Activated CD4-positive, alpha-beta memory T cell treated with anti-CD3 and anti-CD28 coated beads, Interleukin-2, amount 10 ng/mL, durations not matched to agents 7 days and 5 days (primary cell): ENCODE measurements at regions of chr6 and their contacts with region 1.

Region 1: GRCh38 chr6:43402820-43403219 is 24.5 kb upstream of the ABCC10 start:
- DNase-seq: no peak
- H3K4me3 Mint-ChIP-seq: no peak overlapping the region
- H3K27ac Mint-ChIP-seq: no peak overlapping the region
- H3K4me1 Mint-ChIP-seq: peaks cover under 1% of the 10 kb centered on the region
- H3K27me3 Mint-ChIP-seq: peaks cover 20% of the 10 kb centered on the region

Region 2: GRCh38 chr6:43269273-43270007 is 133.4 kb before region 1 on chr6:
- CTCF ChIA-PET with region 1: interaction called, 12 read pairs
- POLR2A ChIA-PET with region 1: no interaction called
- DNase-seq: peak; percentile 34
- H3K4me3 Mint-ChIP-seq: peak overlapping the region; percentile 30
- H3K27ac Mint-ChIP-seq: no peak overlapping the region
- H3K4me1 Mint-ChIP-seq: peaks cover 15% of the 10 kb centered on the region
- H3K27me3 Mint-ChIP-seq: peaks cover 45% of the 10 kb centered on the region

Region 3: DNA sequence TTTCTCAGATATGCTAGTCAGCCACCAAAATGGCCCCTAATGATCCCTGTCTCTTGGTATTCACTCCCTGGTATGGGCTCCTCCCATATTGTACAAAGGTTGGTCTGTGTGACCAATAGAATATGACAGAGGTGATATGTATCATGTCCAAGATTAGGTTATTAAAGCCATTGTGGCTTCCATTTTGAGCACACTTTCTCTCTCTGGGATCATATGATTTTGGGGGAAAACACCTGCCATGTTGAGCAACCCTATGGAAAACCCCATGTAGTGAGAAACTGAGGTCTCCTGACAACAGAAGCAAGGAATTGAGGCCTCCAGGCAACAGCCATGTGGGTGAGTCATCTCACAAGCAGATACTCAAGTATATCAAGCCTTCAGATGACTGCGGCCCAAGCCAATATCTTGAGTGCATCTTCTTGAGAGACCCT is 26.3 kb before region 1 on chr6:
- CTCF ChIA-PET with region 1: interaction called, 22 read pairs
- POLR2A ChIA-PET with region 1: no interaction called
- DNase-seq: peak; percentile 18
- H3K4me3 Mint-ChIP-seq: no peak overlapping the region
- H3K27ac Mint-ChIP-seq: no peak overlapping the region
- H3K4me1 Mint-ChIP-seq: peaks cover 13% of the 10 kb centered on the region
- H3K27me3 Mint-ChIP-seq: peaks cover 14% of the 10 kb centered on the region

Region 4: DNA sequence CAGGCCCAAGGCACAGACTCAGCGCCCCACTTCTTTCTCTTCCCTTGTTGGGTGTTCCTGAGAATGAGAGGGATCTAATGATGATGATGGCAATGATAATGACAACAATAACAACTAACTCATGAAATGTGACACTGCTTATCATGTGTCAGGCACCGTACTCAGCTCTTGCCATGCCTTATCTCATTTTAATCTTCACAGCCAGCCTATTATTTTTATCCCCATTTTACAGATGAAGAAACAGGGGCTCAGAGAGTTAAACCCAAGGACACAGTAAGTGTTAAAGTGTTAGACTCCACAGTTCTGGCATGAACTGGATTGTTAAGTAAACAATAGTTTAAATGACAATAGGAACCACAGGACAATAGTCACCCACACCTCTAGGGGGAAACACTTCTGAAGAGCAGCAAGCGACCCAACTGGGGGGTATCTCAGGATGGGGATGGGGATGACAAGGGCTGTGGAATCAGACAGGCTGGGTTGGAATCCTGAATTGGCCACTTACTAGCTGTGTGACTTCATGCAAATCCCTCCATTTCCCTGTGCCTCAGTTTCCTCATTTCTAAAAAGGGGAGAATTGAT is 254.5 kb after region 1 on chr6:
- CTCF ChIA-PET with region 1: no interaction called
- POLR2A ChIA-PET with region 1: no interaction called
- DNase-seq: no peak
- H3K4me3 Mint-ChIP-seq: no peak overlapping the region
- H3K27ac Mint-ChIP-seq: no peak overlapping the region
- H3K4me1 Mint-ChIP-seq: peaks cover 7% of the 10 kb centered on the region
- H3K27me3 Mint-ChIP-seq: peaks cover 9% of the 10 kb centered on the region